PC-9 (cell line): ENCODE measurements at regions of chr14 and their contacts with region 1.

Region 1: GRCh38 chr14:74733221-74733620 is 20.3 kb downstream of the FCF1 start:
- DNase-seq: no peak
- H3K4me3 ChIP-seq: no peak overlapping the region
- H3K27ac ChIP-seq: no peak overlapping the region
- H3K4me1 ChIP-seq: no peaks in the 10 kb centered on the region
- H3K27me3 ChIP-seq: no peaks in the 10 kb centered on the region
- CTCF ChIP-seq: no peak

Region 2: DNA sequence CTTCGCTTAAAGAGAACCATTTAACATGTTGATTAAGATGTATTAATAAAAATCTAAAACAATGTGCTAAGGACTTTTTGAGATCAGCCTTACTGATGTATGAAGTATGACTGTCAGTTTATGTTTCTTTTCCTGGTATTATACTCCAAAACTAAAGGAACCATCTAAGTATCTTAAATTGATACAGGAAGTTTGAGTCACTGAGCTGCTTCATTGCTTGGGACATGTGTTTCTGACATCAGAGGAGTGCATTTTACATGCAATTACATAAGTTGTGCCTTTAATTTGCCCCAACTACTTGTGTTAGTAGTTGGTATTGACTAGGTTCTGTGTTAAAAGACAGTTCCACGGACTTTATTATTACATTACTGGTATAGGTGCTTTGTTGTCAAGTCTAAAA is 91.8 kb after region 1 on chr14:
- CTCF ChIA-PET with region 1: no interaction called
- POLR2A ChIA-PET with region 1: no interaction called
- intact Hi-C with region 1: loop called (anchors 5 kb)
- DNase-seq: no peak
- H3K4me3 ChIP-seq: no peak overlapping the region
- H3K27ac ChIP-seq: no peak overlapping the region
- H3K4me1 ChIP-seq: no peaks in the 10 kb centered on the region
- H3K27me3 ChIP-seq: no peaks in the 10 kb centered on the region
- CTCF ChIP-seq: no peak